ENCODE measurements at regions of chr14 and their contacts with region 1.

Region 1: DNA sequence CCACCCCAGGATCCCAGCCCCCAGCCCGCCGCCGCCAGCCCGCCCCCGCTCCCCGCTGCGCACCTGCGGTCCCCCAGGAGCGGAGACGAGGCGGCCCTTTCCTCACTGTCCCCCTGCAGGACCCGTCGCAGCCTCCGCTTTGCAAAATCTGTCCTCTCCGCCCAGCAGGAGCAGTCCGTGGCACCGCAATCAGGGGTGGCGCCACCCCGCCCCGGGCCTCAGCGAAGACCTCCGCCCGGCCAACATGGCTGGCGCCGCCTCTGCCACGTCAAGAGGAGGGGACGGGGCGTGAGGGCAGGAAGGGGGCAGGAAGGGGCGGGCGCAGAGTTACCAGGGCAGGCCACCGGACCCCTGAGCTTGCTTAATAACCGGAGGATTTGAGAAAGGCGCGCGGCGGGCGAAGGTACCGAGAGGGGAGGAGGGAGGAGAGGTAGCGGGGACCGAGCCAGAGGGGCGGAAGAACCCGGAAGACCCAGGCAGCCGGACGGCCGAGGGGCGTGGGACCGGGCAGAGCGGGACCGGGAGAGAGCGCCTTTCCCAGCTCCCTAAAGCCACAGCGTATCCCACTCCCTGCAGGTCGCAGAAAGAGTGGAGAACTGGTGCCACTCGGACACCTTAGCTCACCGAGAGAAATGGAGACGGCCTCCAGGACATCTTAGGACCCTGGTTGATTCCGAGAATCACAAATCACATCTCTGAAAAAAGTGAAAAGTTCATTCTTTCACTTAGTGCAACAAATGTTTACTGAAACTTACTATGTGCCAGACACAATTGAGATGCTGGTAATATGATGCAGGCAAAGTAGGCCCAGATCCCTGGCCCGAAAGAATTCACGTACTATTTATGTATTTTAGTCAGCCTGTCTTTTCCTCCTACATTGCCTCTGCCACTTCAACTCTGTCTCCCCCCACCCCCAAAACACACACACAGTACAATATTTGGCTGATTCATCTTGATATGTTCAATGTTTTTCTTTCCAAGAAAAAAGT is at the start of gene SEC23A:
- DNase-seq: peak; percentile 90
- ATAC-seq: peak; percentile 92
- H3K4me3 Mint-ChIP-seq: peak within 1 kb of the TSS; percentile 93
- H3K27ac Mint-ChIP-seq: peak within 1 kb of the TSS; percentile 94
- H3K4me1 Mint-ChIP-seq: peaks cover 37% of the 10 kb centered on the region
- H3K27me3 Mint-ChIP-seq: no peaks in the 10 kb centered on the region
- total RNA-seq, gene SEC23A: 49.6 to 72.8 TPM

Region 2: GRCh38 chr14:39174560-39175444 is 71.5 kb after region 1 on chr14 and contains the start of gene PNN:
- CTCF ChIA-PET with region 1: interaction called, 4 read pairs
- POLR2A ChIA-PET with region 1: interaction called, 4 read pairs
- intact Hi-C with region 1: loop called (anchors 1 kb)
- DNase-seq: peak; percentile 97
- ATAC-seq: peak; percentile 91
- H3K4me3 Mint-ChIP-seq: peak within 1 kb of the TSS; percentile 96
- H3K27ac Mint-ChIP-seq: peak within 1 kb of the TSS; percentile 99
- H3K4me1 Mint-ChIP-seq: peaks cover 40% of the 10 kb centered on the region
- H3K27me3 Mint-ChIP-seq: no peaks in the 10 kb centered on the region
- total RNA-seq, gene PNN: 87.8 to 98.3 TPM

Region 3: GRCh38 chr14:39266871-39267591 is 163.8 kb after region 1 on chr14:
- CTCF ChIA-PET with region 1: no interaction called
- POLR2A ChIA-PET with region 1: interaction called, 3 read pairs
- intact Hi-C with region 1: loop called (anchors 2 to 10 kb)
- DNase-seq: peak; percentile 77
- ATAC-seq: peak; percentile 63
- H3K4me3 Mint-ChIP-seq: peak overlapping the region; percentile 73
- H3K27ac Mint-ChIP-seq: peak overlapping the region; percentile 95
- H3K4me1 Mint-ChIP-seq: peaks cover 50% of the 10 kb centered on the region
- H3K27me3 Mint-ChIP-seq: no peaks in the 10 kb centered on the region

Region 4: DNA sequence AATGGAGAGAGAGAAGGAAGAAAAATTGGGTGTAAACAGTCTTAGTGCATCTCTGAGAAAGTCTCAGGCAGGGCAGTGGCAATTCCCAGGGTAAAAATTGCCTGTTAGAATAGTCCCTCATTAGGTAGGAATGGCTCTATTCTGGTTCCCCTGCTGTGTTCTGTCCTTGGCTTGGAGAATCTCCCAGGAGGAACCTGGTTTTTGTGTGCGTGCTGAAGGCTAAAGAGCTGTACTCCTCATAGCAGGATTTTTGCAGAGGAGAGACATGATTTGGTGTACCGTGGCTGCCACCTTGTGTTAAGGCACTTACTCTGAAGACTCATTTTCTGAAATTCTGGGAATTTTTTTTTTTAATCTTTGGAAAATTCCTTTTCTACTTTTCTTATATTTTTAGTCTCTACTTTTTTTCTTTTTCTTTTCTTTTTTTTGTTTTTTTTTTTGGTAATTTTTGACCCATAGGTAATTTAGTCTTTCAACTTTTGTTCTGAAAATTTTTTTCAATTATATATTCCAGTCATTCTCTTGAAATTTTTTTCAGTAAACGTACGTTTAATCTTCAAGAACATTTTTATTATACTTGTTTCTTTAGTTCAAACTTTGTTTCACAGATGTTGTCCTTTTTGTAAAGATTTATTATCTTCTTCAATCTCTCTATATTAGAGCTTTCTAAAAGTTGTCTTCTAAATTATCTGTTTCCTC is 265.1 kb after region 1 on chr14:
- CTCF ChIA-PET with region 1: interaction called, 3 read pairs
- POLR2A ChIA-PET with region 1: no interaction called
- intact Hi-C with region 1: loop called (anchors 1 to 2 kb)
- DNase-seq: peak; percentile 64
- ATAC-seq: no peak
- H3K4me3 Mint-ChIP-seq: no peak overlapping the region
- H3K27ac Mint-ChIP-seq: no peak overlapping the region
- H3K4me1 Mint-ChIP-seq: no peaks in the 10 kb centered on the region
- H3K27me3 Mint-ChIP-seq: no peaks in the 10 kb centered on the region